ENCODE measurements at regions of chr15 and their contacts with region 1.

Region 1: GRCh38 chr15:72740219-72740618 is 43.3 kb downstream of the ADPGK start:
- DNase-seq: peak; percentile 50
- ATAC-seq: peak; percentile 95
- H3K4me3 ChIP-seq: peak overlapping the region; percentile 22; the same call in 1 of the 2 replicates
- H3K27ac ChIP-seq: peak overlapping the region; percentile 77
- H3K4me1 ChIP-seq: peaks cover 19% of the 10 kb centered on the region
- H3K27me3 ChIP-seq: no peaks in the 10 kb centered on the region
- CTCF ChIP-seq: no peak
- EP300 ChIP-seq: no peak
- POLR2A ChIP-seq: no peak
- RAD21 ChIP-seq: no peak

Region 2: DNA sequence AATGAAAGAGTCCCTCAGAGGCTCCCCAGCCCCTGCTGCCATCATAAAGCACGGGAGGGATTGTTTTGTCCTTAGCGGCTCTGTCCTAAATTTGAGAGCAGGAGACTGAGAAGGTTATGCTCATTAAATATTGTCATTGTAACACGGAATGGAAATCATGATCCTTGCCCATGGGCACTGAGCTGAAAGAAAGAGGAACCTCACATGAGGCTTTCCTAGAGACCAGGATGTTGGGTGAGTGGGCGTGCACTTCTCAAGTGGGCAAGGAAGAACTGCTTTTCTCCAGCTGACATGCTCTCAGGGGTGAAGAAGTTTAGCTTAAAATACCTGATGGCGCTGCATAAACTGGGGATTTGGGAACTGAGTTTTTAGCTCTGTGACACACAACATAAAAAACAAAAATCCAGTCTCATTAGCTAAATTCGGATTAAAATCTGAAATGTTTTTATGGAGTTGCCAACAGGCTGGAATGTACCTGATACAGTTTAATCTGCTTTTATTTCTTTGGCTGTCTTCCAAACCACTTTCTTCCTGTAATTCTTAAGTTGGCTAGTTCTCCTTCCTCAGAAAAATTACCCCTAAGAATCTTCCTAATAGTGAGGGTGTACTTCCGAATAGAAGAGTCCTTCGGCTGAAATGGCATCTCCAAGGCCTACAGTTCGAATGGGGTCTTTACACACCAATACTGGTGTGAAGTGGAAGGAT is 11.7 kb after region 1 on chr15:
- CTCF ChIA-PET with region 1: interaction called, 3 read pairs
- POLR2A ChIA-PET with region 1: interaction called, 6 read pairs
- RAD21 ChIA-PET with region 1: interaction called, 3 read pairs
- SMC1A ChIA-PET with region 1: interaction called, 15 read pairs
- in situ Hi-C with region 1: no loop called
- intact Hi-C with region 1: no loop called
- DNase-seq: no peak
- ATAC-seq: no peak
- H3K4me3 ChIP-seq: no peak overlapping the region
- H3K27ac ChIP-seq: no peak overlapping the region
- H3K4me1 ChIP-seq: no peaks in the 10 kb centered on the region
- H3K27me3 ChIP-seq: no peaks in the 10 kb centered on the region
- CTCF ChIP-seq: no peak
- EP300 ChIP-seq: no peak
- POLR2A ChIP-seq: no peak; the same call in 1 of the 2 replicates
- RAD21 ChIP-seq: no peak

Region 3: DNA sequence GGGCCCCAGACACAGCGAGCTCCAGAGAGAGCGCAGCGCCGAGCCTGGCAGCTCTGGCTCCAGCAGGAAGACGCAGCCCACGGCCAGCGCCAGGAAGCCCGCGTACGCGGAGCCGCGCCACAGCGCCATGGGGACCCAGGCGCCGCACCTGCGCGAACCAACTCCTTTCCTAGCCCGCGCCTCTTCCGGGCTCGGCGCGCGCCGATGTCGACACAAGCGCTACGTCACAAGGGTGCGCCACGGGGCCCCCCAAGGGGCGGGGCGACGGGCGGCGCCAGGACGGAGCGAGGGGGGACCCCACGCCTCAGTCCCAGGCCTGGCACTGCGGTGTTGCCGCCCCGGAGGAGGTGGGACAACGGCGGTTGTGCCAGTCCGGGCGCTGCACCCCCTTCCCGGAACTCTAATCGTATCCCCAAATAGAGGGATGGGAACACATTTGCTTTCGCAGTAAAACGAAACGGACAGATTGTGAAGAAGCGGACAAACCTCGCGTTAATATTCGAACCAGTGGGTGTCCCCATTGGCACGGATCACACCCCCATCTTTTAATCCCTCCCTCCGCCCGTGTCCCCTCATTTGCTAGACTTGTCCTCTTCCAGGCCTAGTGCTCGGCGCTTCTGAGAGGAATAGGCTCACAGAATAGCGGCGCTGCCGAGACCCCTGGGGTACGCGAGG is 43.5 kb after region 1 on chr15 and contains the start of gene ADPGK:
- CTCF ChIA-PET with region 1: interaction called, 4 read pairs
- POLR2A ChIA-PET with region 1: interaction called, 7 read pairs
- RAD21 ChIA-PET with region 1: interaction called, 8 read pairs
- SMC1A ChIA-PET with region 1: interaction called, 4 read pairs
- in situ Hi-C with region 1: no loop called
- intact Hi-C with region 1: loop called (anchors 5 kb)
- DNase-seq: peak; percentile 70
- ATAC-seq: peak; percentile 86
- H3K4me3 ChIP-seq: peak within 1 kb of the TSS; percentile 94
- H3K27ac ChIP-seq: peak within 1 kb of the TSS; percentile 93
- H3K4me1 ChIP-seq: peaks cover 31% of the 10 kb centered on the region
- H3K27me3 ChIP-seq: no peaks in the 10 kb centered on the region
- CTCF ChIP-seq: 0 out of 6 replicates have a peak, but pooled peaks of 1 of the 3 experiments have one; percentile 0
- EP300 ChIP-seq: peak in 1 of 2 experiments; percentile 34; a peak in 1 of 4 replicates
- POLR2A ChIP-seq: peak; percentile 98
- RAD21 ChIP-seq: no peak
- polyA plus RNA-seq, gene ADPGK: 13.8 to 18.1 TPM

Region 4: DNA sequence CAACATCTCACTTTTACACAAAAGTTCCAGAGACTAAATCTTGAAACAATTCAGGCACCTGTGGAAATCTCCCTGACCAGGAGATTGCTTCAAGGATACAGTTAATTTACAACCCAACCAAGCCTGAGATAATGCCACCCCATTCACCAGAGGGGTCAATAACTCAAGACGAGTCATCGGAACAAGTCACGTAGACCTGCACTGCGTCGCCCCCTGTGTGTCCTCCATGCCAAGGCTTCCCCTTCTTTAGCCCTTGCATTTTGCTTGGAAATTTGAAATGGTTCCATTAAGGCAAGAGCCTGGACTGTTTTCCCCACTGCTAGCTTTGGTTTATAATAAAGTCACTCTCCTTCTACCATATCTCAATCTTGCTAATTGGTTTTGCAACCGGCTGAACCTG is 183.1 kb after region 1 on chr15:
- CTCF ChIA-PET with region 1: no interaction called
- POLR2A ChIA-PET with region 1: no interaction called
- RAD21 ChIA-PET with region 1: no interaction called
- SMC1A ChIA-PET with region 1: no interaction called
- in situ Hi-C with region 1: no loop called
- intact Hi-C with region 1: no loop called
- DNase-seq: no peak
- ATAC-seq: no peak
- H3K4me3 ChIP-seq: no peak overlapping the region
- H3K27ac ChIP-seq: no peak overlapping the region
- H3K4me1 ChIP-seq: no peaks in the 10 kb centered on the region
- H3K27me3 ChIP-seq: no peaks in the 10 kb centered on the region
- CTCF ChIP-seq: no peak
- EP300 ChIP-seq: no peak
- POLR2A ChIP-seq: no peak
- RAD21 ChIP-seq: no peak

Measured in GM12878 (cell line).